Natural killer cell (primary cell): ENCODE measurements at regions of chr22 and their contacts with region 1.

Region 1: DNA sequence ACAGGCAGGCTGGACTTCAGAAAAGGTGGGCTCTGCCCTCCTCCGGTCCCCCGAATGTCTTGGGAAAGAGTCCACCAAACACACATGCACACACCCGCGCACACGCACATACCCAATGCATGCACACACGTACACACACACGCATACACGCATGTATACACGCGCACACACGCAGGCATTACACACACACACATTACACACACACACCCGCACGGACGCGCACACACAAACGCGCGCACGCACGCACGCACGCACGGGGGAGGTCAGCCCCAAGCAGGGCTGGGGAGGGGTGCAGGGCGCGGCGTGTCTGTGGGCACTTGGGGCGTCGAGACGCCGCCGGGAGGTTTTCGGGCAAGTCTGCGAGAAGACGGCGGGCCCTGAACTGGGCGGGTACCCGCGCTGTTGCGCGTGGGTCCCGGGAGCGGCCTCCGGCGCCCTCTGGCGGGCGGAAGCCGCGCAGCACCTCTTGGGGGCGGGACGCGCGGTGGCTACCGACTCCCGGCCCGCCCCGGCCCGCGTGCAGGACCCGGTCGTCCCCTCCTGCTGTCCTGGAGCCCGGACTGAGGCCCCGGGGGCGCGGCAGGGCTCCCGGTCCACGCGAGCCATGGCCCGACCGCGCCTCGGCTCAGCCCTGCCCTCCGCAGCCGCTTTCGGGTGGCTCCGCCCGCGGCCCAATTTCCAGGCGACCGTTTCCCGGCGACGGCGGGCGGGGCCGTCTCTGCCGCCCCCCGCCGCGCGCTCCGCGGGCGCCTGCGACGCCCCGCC is 3.6 kb downstream of the SEPTIN5 start:
- DNase-seq: peak; percentile 85 to 90
- ATAC-seq: peak; percentile 95 to 98 (median 98)
- H3K4me3 ChIP-seq: peak overlapping the region; percentile 20
- H3K4me3 Mint-ChIP-seq: peak overlapping the region; percentile 75
- H3K27ac ChIP-seq: no peak overlapping the region
- H3K27ac Mint-ChIP-seq: no peak overlapping the region
- H3K4me1 ChIP-seq: peaks cover 17% of the 10 kb centered on the region
- H3K4me1 Mint-ChIP-seq: peaks cover 0 to 10% of the 10 kb centered on the region in 2 donors
- H3K27me3 ChIP-seq: peaks cover 30% of the 10 kb centered on the region
- H3K27me3 Mint-ChIP-seq: peaks cover 21 to 42% of the 10 kb centered on the region in 2 donors
- CTCF ChIP-seq: peak; percentile 97

Region 2: DNA sequence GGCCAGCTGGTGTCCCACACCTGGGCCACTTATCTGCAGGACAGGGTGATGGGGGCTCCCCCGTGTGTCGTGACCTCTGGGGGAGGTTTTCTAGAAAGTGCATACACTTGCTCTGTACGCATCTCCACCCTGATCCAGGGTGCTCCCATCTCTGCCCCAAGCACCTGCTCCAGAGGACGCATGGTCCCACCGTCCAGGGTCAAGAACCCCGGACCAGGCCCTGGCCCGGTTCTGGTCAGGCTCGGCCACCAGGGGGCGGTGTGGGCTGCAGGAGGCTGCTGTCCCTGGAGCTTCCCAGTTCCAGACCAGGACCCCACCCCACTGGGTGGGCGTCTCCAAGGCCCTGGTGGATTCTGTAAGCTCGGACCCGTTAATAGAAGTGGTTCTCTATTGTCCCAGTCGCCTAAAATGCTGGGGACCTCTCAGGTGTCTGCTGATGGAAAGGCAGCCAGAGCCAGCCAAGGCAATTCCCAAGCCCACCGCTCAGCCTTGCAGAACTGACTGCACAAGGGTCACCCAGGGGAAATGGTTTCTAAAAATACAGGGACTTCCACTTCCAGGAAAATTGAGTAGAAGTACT is 38.3 kb before region 1 on chr22:
- intact Hi-C with region 1: loop called (anchors 5 kb)
- DNase-seq: peak; percentile 32 to 60
- ATAC-seq: peak in 2 of 3 donors; percentile 56 to 57
- H3K4me3 ChIP-seq: no peak overlapping the region
- H3K4me3 Mint-ChIP-seq: no peak overlapping the region
- H3K27ac ChIP-seq: no peak overlapping the region
- H3K27ac Mint-ChIP-seq: no peak overlapping the region
- H3K4me1 ChIP-seq: no peaks in the 10 kb centered on the region
- H3K4me1 Mint-ChIP-seq: no peaks in the 10 kb centered on the region
- H3K27me3 ChIP-seq: peaks cover 3% of the 10 kb centered on the region
- H3K27me3 Mint-ChIP-seq: peaks cover 16 to 33% of the 10 kb centered on the region in 2 donors
- CTCF ChIP-seq: peak; percentile 70

Region 3: GRCh38 chr22:20000169-20000621 is 282.3 kb after region 1 on chr22:
- intact Hi-C with region 1: no loop called
- DNase-seq: no peak
- ATAC-seq: no peak
- H3K4me3 ChIP-seq: no peak overlapping the region
- H3K4me3 Mint-ChIP-seq: no peak overlapping the region
- H3K27ac ChIP-seq: no peak overlapping the region
- H3K27ac Mint-ChIP-seq: no peak overlapping the region
- H3K4me1 ChIP-seq: no peaks in the 10 kb centered on the region
- H3K4me1 Mint-ChIP-seq: no peaks in the 10 kb centered on the region
- H3K27me3 ChIP-seq: no peaks in the 10 kb centered on the region
- H3K27me3 Mint-ChIP-seq: no peaks in the 10 kb centered on the region
- CTCF ChIP-seq: no peak